AG04449 (cell line): ENCODE measurements at regions of chr7 and their contacts with region 1.

Region 1: GRCh38 chr7:128322040-128322643 is 21.6 kb downstream of the RBM28 start:
- DNase-seq: no peak
- H3K4me3 ChIP-seq: no peak overlapping the region
- CTCF ChIP-seq: peak; percentile 44

Region 2: DNA sequence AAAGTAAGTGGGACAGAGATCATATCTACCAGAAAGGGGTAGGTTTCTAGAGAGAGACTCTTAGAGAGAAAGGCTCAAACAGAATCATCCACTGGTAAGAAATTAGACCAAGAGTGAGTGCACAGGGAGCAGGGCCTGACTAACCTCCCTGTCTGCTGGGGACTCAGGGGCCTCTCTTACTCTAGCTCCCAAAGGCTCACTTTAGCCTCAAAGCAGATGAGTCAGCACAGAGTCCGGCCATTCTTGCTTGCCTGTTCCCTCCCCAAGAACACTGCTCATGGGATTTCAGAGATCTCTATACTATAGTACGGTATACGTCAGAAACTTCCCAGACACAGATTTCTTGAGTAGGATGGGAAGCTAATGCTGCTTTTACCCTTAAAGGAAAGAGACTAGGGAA is 11.1 kb before region 1 on chr7:
- CTCF ChIA-PET with region 1: interaction called, 22 read pairs
- POLR2A ChIA-PET with region 1: no interaction called
- DNase-seq: no peak
- H3K4me3 ChIP-seq: no peak overlapping the region
- CTCF ChIP-seq: no peak

Region 3: GRCh38 chr7:128335734-128336133 is 13.6 kb after region 1 on chr7:
- CTCF ChIA-PET with region 1: interaction called, 19 read pairs
- POLR2A ChIA-PET with region 1: no interaction called
- DNase-seq: no peak
- H3K4me3 ChIP-seq: no peak overlapping the region
- CTCF ChIP-seq: no peak